ENCODE measurements at regions of chr17 and their contacts with region 1.

Region 1: DNA sequence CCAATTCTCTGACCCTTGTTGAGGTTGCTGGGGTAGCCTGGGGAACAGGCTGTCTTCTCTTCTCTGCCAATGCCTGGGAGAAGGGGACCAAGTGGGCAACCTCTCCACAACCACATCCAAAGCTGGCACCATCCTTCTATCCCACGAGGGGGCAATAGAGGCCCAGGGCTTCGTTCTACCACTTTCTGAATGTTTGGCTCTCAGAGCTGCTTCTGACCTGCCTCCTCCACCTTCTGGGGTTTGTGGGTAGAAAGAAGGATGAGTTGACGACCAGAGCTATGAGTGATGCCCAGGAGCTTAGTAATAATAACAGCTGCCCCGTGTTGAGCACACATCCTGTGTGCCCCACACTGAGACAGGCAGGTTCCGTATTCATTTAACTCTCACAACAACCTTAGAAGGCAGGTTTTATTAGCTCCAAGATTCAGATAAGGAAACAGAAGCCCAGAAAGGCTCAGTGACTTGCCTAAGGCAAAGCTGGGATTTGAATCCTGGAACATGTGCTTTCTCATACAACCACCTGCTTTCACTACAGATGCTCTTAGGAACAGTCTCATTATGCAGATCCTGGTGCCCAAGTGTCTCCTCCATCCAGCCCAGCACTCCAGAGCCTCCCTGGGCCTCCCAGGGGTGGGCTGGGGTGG is 11.1 kb downstream of the TSPOAP1 start:
- DNase-seq: peak; percentile 88
- ATAC-seq: peak; percentile 89
- H3K4me3 Mint-ChIP-seq: no peak overlapping the region
- H3K27ac Mint-ChIP-seq: peak overlapping the region; percentile 84
- H3K4me1 Mint-ChIP-seq: peaks cover 14% of the 10 kb centered on the region
- H3K27me3 Mint-ChIP-seq: no peaks in the 10 kb centered on the region

Region 2: GRCh38 chr17:58249270-58250133 is 68.0 kb before region 1 on chr17:
- CTCF ChIA-PET with region 1: interaction called, 11 read pairs
- DNase-seq: peak; percentile 77
- ATAC-seq: peak; percentile 89
- H3K4me3 Mint-ChIP-seq: peak overlapping the region; percentile 66
- H3K27ac Mint-ChIP-seq: no peak overlapping the region
- H3K4me1 Mint-ChIP-seq: peaks cover 22% of the 10 kb centered on the region
- H3K27me3 Mint-ChIP-seq: peaks cover 58% of the 10 kb centered on the region

Region 3: DNA sequence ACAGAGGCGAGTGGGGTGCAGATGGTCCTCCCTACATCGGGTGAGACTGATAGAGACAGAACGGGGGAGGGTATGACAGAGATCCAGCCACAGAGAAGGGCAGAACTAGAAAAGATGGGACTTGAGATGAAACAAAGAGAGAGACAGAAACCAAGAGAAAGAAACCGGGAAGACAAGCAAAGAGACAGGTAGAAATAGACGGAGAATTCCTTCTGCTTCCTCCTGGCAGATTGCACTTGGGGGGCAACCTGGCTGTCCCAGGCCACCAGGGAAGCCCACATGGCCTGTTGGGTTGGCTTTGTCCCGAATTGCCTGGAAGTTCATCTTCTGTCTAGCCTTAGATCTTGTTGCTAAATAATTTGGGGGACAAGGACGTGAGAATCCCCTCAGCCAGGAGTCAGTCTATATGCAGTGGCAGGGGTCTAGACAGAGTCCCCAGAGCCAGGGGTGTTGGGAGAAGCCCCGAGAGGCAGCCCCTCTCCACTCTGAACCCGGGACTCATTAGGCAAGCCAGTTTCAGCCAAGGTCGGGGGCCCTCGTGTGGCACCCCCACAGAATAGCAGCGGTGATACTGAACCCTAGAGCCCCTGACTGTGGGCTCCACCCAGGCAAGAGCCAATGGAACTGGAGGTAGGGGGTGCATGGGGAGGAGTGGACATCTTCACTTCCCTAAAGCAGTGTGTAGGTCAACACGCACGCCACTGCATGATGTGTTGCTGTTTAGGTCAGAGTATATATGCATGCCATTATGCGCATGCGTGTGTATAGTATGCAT is 11.7 kb after region 1 on chr17:
- CTCF ChIA-PET with region 1: interaction called, 37 read pairs
- DNase-seq: peak; percentile 94
- ATAC-seq: peak; percentile 25
- H3K4me3 Mint-ChIP-seq: peak overlapping the region; percentile 83
- H3K27ac Mint-ChIP-seq: peak overlapping the region; percentile 99
- H3K4me1 Mint-ChIP-seq: peaks cover 35% of the 10 kb centered on the region
- H3K27me3 Mint-ChIP-seq: peaks cover 3% of the 10 kb centered on the region

Region 4: GRCh38 chr17:58344047-58344790 is 26.7 kb after region 1 on chr17:
- CTCF ChIA-PET with region 1: interaction called, 136 read pairs
- DNase-seq: peak; percentile 97
- ATAC-seq: peak; percentile 75
- H3K4me3 Mint-ChIP-seq: peak overlapping the region; percentile 83
- H3K27ac Mint-ChIP-seq: peak overlapping the region; percentile 98
- H3K4me1 Mint-ChIP-seq: peaks cover 87% of the 10 kb centered on the region
- H3K27me3 Mint-ChIP-seq: no peaks in the 10 kb centered on the region

Region 5: GRCh38 chr17:58417300-58418092 is 100.0 kb after region 1 on chr17 and contains the start of gene RNF43:
- CTCF ChIA-PET with region 1: interaction called, 18 read pairs
- DNase-seq: peak; percentile 90
- ATAC-seq: peak; percentile 99
- H3K4me3 Mint-ChIP-seq: no peak within 1 kb of the TSS
- H3K27ac Mint-ChIP-seq: no peak within 1 kb of the TSS
- H3K4me1 Mint-ChIP-seq: peaks cover 24% of the 10 kb centered on the region
- H3K27me3 Mint-ChIP-seq: peaks cover 2% of the 10 kb centered on the region
- total RNA-seq, gene RNF43: 0.23 to 0.52 TPM

Region 6: DNA sequence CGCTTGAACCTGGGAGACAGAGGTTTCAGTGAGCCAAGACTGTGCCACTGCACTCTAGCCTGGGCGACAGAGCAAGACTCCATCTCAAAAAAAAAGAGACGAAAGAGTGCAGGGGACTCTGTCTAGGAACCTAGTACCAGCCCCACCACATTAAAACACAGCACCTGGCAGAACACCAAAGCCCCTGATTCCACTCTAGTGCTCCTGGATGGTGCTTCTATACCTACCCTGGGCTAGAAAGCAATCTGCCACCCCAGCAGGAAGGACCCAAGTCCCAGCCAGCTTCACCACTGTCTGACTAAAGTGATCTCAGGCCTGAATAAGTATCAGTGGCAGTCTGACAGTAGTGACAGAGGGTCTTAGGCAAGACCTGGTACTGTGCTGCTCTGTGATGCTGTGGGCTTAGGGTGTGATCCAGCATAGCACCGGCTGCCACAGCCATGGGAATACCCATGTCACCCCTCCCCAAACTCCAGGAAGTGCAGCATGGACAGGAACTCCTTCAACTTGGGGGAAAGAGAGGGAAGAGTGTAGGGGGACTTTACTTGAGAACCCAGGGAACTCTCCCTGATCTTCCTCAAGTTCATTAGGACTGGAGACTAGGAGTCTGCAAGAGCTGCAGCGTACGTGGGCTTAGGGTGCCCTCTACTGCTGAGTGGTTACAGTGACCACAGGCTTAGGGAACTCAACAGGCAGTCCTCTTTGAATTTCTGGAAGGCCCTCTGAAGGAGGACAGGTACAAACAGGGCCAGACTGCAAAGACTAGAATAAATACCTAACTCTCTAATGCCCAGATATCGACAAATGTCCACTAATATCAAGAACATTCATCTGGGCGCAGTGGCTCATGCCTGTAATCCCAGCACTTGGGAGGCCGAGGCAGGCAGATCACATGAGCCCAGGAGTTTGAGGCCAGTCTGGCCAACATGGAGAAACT is 129.8 kb after region 1 on chr17:
- CTCF ChIA-PET with region 1: interaction called, 25 read pairs
- DNase-seq: peak; percentile 86
- ATAC-seq: peak; percentile 97
- H3K4me3 Mint-ChIP-seq: no peak overlapping the region
- H3K27ac Mint-ChIP-seq: no peak overlapping the region
- H3K4me1 Mint-ChIP-seq: peaks cover 5% of the 10 kb centered on the region
- H3K27me3 Mint-ChIP-seq: no peaks in the 10 kb centered on the region

Measured in activated CD8-positive, alpha-beta memory T cell treated with anti-CD3 and anti-CD28 coated beads, Interleukin-2, amount 10 ng/mL, durations not matched to agents 7 days and 5 days (primary cell).